ENCODE measurements at regions of chr18 and their contacts with region 1.

Region 1: GRCh38 chr18:286515-287310 is 18.9 kb upstream of the THOC1 start:
- DNase-seq: no peak
- ATAC-seq: no peak

Region 2: GRCh38 chr18:457140-457519 is 170.4 kb after region 1 on chr18:
- intact Hi-C with region 1: loop called (anchors 10 kb)
- DNase-seq: peak; percentile 76
- ATAC-seq: peak; percentile 89

Region 3: DNA sequence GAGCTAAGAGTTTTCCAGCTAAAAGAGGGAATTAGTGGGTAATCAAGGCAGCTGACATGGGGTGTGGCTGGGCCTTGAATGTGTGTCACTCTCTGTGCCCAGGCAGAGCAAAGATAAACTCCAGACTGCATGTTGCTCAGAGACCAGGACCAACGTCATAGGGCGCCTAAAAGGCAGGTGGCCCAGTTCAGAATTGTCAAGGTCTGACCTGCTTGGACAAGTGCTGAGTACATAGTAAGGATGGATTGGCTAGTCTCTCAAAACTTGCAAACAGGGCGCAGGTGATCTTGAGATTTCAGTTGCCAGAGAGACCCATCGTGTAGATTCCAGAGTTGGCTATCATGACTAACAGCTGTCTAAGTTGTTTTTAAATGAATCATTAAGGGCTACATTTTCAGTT is 329.1 kb after region 1 on chr18:
- intact Hi-C with region 1: loop called (anchors 2 kb)
- DNase-seq: no peak
- ATAC-seq: peak; percentile 27

Region 4: GRCh38 chr18:1361936-1362335 is 1075.2 kb after region 1 on chr18:
- intact Hi-C with region 1: no loop called
- DNase-seq: no peak
- ATAC-seq: no peak

Measured in Right ventricle myocardium inferior (tissue), 1 donor.